ENCODE measurements at regions of chr16 and their contacts with region 1.

Region 1: DNA sequence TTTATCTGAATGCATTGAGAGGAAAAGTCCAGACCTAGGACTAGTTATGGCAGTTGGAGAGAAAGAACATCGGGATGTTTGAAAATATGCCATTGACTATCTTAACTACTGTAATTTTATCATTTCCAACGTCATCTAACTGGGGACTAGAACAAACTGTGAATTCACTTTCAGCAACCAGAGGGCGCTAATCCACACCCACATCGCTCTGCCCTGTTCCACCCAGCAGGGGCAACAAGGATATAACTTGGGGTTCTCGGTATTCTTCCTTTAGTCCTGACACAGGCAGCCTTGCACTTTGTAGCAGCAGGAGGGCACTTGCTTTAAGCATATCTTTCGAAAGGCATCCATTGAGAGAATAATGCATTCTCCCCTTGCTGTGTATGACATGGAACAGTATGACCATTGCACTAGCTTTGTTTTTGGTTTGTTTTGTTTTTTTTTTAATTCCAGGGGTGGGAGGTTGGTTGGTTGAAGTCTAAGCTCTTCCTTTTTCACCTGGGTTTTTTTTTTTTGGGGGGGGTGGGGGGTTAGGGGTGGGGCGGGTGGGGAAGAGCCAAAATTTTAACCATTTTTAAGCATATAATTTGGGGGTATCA is 31.5 kb downstream of the SIAH1 start:
- DNase-seq: peak; percentile 32 to 58
- ATAC-seq: peak; percentile 57 to 72
- H3K4me3 ChIP-seq: no peak overlapping the region
- H3K27ac ChIP-seq: peak overlapping the region; percentile 54 to 72 (median 67)
- H3K4me1 ChIP-seq: peaks cover 12 to 18% of the 10 kb centered on the region in 2 donors
- H3K27me3 ChIP-seq: no peaks in the 10 kb centered on the region
- CTCF ChIP-seq: peak; percentile 80 to 88 (median 81)
- POLR2A ChIP-seq: no peak

Region 2: GRCh38 chr16:48393485-48394354 is 40.1 kb after region 1 on chr16:
- in situ Hi-C with region 1: no loop called
- intact Hi-C with region 1: loop called (anchors 5 kb)
- DNase-seq: peak; percentile 87
- ATAC-seq: peak; percentile 97 to 99
- H3K4me3 ChIP-seq: no peak overlapping the region
- H3K27ac ChIP-seq: peak overlapping the region; percentile 86 to 92 (median 88)
- H3K4me1 ChIP-seq: peaks cover 28 to 30% of the 10 kb centered on the region in 2 donors
- H3K27me3 ChIP-seq: no peaks in the 10 kb centered on the region
- CTCF ChIP-seq: no peak
- POLR2A ChIP-seq: peak; percentile 60 to 74

Region 3: DNA sequence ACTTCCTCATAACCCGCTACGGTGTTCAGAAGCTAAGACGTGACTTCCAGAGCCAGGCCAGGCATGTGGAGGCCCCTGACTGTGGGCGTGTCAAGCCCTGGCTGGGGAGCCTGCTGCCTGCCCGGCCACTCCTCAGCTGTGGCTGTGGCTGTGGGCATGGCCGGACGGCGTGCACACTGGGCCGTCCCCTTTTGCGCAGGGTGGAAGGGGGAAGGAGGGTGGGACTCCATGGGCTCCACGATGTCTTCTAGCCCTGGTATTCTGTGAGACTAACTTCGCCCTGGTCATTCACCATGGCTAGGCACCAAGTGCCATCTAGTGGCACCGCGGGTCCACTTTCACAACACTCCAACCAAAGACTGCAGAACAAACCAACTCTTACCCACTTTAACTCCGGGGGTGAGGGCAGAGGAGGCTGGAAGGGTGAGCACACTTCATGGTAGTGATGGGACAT is 188.4 kb after region 1 on chr16:
- in situ Hi-C with region 1: loop called (anchors 5 to 10 kb)
- intact Hi-C with region 1: loop called (anchors 1 kb)
- DNase-seq: peak; percentile 32 to 62
- ATAC-seq: peak; percentile 71 to 83
- H3K4me3 ChIP-seq: no peak overlapping the region
- H3K27ac ChIP-seq: peak overlapping the region in 2 of 4 donors; percentile 23 to 40
- H3K4me1 ChIP-seq: peaks cover 22 to 38% of the 10 kb centered on the region in 2 donors
- H3K27me3 ChIP-seq: no peaks in the 10 kb centered on the region
- CTCF ChIP-seq: peak; percentile 44 to 66 (median 56)
- POLR2A ChIP-seq: no peak

Region 4: DNA sequence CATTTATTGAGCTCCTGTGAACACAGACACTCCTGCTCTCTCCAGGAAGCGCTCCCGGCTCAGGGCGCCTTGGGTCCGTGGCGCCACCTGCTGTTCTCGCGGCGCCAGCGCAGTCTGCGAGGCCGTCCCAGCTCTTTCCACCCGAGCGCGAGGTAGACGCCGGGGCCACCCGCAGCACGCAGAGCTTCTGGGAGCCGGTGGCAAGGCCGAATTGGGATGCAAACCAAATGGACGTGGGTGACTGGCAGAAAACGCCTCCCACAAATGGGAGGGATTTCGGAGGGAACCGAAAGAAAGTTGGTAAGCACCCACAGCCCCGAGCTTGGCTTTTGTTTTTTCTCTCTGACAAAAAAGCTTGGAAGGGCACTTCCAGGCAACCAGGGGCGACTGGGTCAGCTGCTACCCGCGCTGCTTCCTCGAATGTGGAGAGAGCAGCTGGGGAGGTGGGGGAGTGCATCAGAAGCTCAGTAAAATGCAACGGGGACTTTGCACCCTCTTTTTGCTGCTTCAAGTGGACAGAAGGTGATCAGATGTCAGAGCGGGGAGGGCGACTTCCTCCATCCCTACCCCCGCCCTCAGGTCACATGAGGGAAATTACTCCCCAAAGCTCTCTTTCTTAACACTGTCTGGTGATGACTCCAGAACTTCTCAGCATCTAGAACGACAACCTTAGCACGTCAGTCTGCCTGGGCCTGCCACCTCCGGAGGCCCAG is 269.8 kb after region 1 on chr16:
- in situ Hi-C with region 1: loop called in 3 of 4 experiments (anchors 5 to 10 kb)
- intact Hi-C with region 1: loop called (anchors 1 kb)
- DNase-seq: peak; percentile 60 to 66
- ATAC-seq: peak; percentile 95
- H3K4me3 ChIP-seq: peak overlapping the region; percentile 57 to 64 (median 60)
- H3K27ac ChIP-seq: peak overlapping the region; percentile 63 to 76 (median 66)
- H3K4me1 ChIP-seq: peaks cover 4 to 15% of the 10 kb centered on the region in 2 donors
- H3K27me3 ChIP-seq: no peaks in the 10 kb centered on the region
- CTCF ChIP-seq: peak; percentile 93 to 99 (median 96)
- POLR2A ChIP-seq: peak in 1 of 2 donors; percentile 14

Region 5: DNA sequence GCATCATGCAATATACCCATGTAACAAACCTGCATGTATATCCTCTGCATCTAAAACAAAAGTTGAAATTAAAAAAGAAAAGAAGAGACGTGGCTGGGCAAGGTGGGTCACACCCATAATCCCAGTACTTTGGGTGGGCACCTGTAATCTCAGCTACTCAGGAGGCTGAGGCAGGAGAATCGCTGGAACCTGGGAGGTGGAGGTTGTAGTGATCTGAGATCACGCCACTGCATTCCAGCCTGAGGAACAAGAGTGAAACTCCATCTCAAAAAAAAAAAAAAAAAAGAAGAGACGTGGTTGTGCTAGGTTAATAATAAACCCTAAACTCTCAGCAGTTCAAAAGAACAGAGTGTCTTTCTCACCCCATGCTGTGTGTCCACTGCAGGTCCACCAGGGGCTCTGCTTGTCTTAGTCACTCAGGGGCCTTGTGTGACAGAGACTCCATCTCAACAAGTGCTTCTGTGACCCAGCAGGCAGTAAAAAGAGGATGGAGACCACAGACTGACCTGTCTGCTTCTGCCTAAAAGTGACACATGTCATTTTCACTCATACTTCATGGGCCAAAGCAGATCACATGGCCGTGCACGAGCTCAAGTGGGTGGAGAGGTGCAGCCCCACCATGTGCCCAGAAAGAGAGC is 278.6 kb after region 1 on chr16:
- in situ Hi-C with region 1: loop called (anchors 5 to 10 kb)
- intact Hi-C with region 1: no loop called
- DNase-seq: no peak
- ATAC-seq: no peak
- H3K4me3 ChIP-seq: no peak overlapping the region
- H3K27ac ChIP-seq: no peak overlapping the region
- H3K4me1 ChIP-seq: peaks cover 0 to 3% of the 10 kb centered on the region in 2 donors
- H3K27me3 ChIP-seq: no peaks in the 10 kb centered on the region
- CTCF ChIP-seq: no peak
- POLR2A ChIP-seq: no peak

Measured in gastrocnemius medialis (tissue), 4 donors.